ENCODE measurements at regions of chr11 and their contacts with region 1.

Region 1: GRCh38 chr11:73760679-73761402 is at the start of gene RAB6A:
- DNase-seq: peak; percentile 100
- ATAC-seq: peak; percentile 93 to 96 (median 95)
- H3K4me3 ChIP-seq: peak within 1 kb of the TSS; percentile 97
- H3K27ac ChIP-seq: peak within 1 kb of the TSS; percentile 98
- H3K4me1 ChIP-seq: peaks cover 16% of the 10 kb centered on the region
- H3K27me3 ChIP-seq: no peaks in the 10 kb centered on the region
- CTCF ChIP-seq: peak; percentile 34
- total RNA-seq, gene RAB6A: 74.9 to 88.2 (median 86.9) TPM

Region 2: GRCh38 chr11:73779084-73779902 is 18.5 kb after region 1 on chr11:
- intact Hi-C with region 1: loop called in 1 of 2 experiments (anchors 1 kb)
- DNase-seq: peak; percentile 99
- ATAC-seq: peak; percentile 100
- H3K4me3 ChIP-seq: peak overlapping the region; percentile 84
- H3K27ac ChIP-seq: peak overlapping the region; percentile 92
- H3K4me1 ChIP-seq: peaks cover 5% of the 10 kb centered on the region
- H3K27me3 ChIP-seq: no peaks in the 10 kb centered on the region
- CTCF ChIP-seq: no peak

Region 3: DNA sequence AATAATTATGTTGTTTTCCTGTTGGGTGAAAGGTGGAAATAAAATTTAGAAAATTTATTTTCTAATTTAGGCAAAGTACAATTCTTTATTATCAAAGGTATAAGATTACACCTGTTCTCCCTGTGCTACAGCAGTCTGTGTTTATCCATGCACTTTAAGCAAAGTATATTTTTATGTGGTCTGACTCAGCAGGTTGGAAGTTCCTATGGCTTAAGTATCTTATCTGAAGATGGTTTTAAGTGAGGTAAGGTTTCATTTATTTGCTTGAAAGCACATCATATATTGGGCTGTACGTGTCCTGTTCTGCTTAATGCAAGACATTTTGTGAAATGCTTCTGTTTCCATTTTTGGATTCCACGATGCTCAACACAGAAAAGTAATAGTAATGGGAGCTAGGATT is 424.9 kb after region 1 on chr11:
- intact Hi-C with region 1: no loop called
- DNase-seq: no peak
- ATAC-seq: peak; percentile 73 to 85 (median 80)
- H3K4me3 ChIP-seq: peak overlapping the region; percentile 2
- H3K27ac ChIP-seq: peak overlapping the region; percentile 24
- H3K4me1 ChIP-seq: peaks cover 23% of the 10 kb centered on the region
- H3K27me3 ChIP-seq: no peaks in the 10 kb centered on the region
- CTCF ChIP-seq: no peak

Measured in psoas muscle (tissue), 8 donors.